ENCODE measurements at regions of chr18 and their contacts with region 1.

Region 1: GRCh38 chr18:8696749-8697211 is 8.6 kb upstream of the MTCL1 start:
- DNase-seq: peak; percentile 74
- ATAC-seq: peak; percentile 82
- H3K4me3 Mint-ChIP-seq: no peak overlapping the region
- H3K27ac Mint-ChIP-seq: no peak overlapping the region
- H3K4me1 Mint-ChIP-seq: peaks cover 12% of the 10 kb centered on the region
- H3K27me3 Mint-ChIP-seq: no peaks in the 10 kb centered on the region
- CTCF ChIP-seq: peak; percentile 62

Region 2: GRCh38 chr18:8609659-8610458 is 86.9 kb before region 1 on chr18:
- CTCF ChIA-PET with region 1: no interaction called
- POLR2A ChIA-PET with region 1: no interaction called
- intact Hi-C with region 1: no loop called
- DNase-seq: no peak
- ATAC-seq: peak; percentile 13
- H3K4me3 Mint-ChIP-seq: peak overlapping the region; percentile 89
- H3K27ac Mint-ChIP-seq: peak overlapping the region; percentile 76
- H3K4me1 Mint-ChIP-seq: peaks cover 72% of the 10 kb centered on the region
- H3K27me3 Mint-ChIP-seq: no peaks in the 10 kb centered on the region
- CTCF ChIP-seq: no peak

Region 3: DNA sequence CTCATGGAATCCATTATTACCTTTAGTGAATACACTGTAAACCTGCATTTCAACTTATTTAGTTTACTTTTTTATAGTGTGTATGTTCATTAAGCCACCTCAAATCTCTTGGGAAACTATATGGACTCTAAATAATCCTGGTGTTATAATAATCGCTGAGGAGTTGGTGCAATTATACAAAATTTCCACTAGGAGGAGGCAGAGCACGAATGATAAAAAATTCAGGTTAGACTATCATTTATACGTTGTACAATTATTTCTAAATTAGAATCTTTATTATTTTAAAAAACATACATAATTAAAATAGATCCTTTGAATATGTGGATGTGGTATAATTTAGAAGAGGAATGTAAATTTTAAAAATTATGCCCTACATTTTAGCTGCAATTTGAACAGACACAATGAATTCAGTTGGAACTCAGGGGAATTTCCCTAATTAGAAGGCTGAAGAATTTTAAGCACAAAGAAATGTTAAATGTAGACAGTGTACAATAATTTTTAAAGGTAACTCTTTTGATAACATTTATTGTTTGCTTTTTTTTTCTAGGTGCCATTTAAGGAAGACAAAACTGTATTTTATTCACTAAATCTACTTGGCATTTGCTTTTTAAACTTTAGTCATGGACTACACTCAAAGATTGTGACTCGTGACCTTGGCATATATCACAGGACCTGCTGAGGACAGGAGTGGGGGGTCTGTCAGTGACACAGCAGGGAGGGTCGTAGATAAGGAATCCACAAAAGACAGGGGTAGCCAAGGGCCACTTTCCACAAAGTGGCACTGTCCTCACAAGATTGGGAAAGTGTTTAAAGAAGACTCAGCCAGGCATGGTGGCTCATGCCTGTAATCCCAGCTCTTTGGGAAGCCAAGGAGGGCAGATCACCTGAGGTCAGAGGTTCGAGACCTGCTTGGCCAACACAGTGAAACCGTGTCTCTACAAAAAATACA is 42.0 kb before region 1 on chr18:
- CTCF ChIA-PET with region 1: interaction called, 11 read pairs
- POLR2A ChIA-PET with region 1: no interaction called
- intact Hi-C with region 1: loop called (anchors 1 kb)
- DNase-seq: no peak
- ATAC-seq: no peak
- H3K4me3 Mint-ChIP-seq: no peak overlapping the region
- H3K27ac Mint-ChIP-seq: no peak overlapping the region
- H3K4me1 Mint-ChIP-seq: peaks cover 6% of the 10 kb centered on the region
- H3K27me3 Mint-ChIP-seq: no peaks in the 10 kb centered on the region
- CTCF ChIP-seq: peak; percentile 67

Region 4: GRCh38 chr18:8730080-8730827 is 33.5 kb after region 1 on chr18:
- CTCF ChIA-PET with region 1: interaction called, 5 read pairs
- POLR2A ChIA-PET with region 1: interaction called, 11 read pairs
- intact Hi-C with region 1: no loop called
- DNase-seq: no peak
- ATAC-seq: no peak
- H3K4me3 Mint-ChIP-seq: peak overlapping the region; percentile 1
- H3K27ac Mint-ChIP-seq: no peak overlapping the region
- H3K4me1 Mint-ChIP-seq: peaks cover 25% of the 10 kb centered on the region
- H3K27me3 Mint-ChIP-seq: peaks cover 2% of the 10 kb centered on the region
- CTCF ChIP-seq: no peak

Region 5: DNA sequence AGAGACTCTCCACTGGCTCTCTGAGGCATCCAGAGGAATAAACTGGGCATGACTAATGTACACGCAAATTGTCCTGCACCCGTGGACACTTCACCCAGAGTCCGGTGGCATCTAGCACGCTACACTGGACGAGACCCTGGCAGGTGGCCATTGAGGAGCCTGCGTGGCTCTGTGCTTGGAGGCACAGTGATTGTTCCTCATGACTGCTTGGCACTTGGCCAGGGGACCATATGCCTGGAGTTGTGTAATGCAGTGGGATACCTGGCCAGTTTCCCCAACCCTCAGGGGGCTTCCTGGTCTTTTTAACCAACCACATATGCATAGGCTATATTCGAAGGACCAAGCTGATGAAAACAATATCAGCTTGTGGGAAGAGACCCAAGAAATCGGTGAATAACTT is 75.2 kb after region 1 on chr18:
- CTCF ChIA-PET with region 1: no interaction called
- POLR2A ChIA-PET with region 1: no interaction called
- intact Hi-C with region 1: no loop called
- DNase-seq: no peak
- ATAC-seq: no peak
- H3K4me3 Mint-ChIP-seq: no peak overlapping the region
- H3K27ac Mint-ChIP-seq: no peak overlapping the region
- H3K4me1 Mint-ChIP-seq: no peaks in the 10 kb centered on the region
- H3K27me3 Mint-ChIP-seq: no peaks in the 10 kb centered on the region
- CTCF ChIP-seq: no peak

Region 6: GRCh38 chr18:8786478-8787370 is 89.9 kb after region 1 on chr18:
- CTCF ChIA-PET with region 1: no interaction called
- POLR2A ChIA-PET with region 1: no interaction called
- intact Hi-C with region 1: loop called (anchors 1 kb)
- DNase-seq: no peak
- ATAC-seq: peak; percentile 65
- H3K4me3 Mint-ChIP-seq: peak overlapping the region; percentile 53
- H3K27ac Mint-ChIP-seq: peak overlapping the region; percentile 19
- H3K4me1 Mint-ChIP-seq: peaks cover 11% of the 10 kb centered on the region
- H3K27me3 Mint-ChIP-seq: no peaks in the 10 kb centered on the region
- CTCF ChIP-seq: no peak

Region 7: GRCh38 chr18:8982416-8983184 is 285.8 kb after region 1 on chr18:
- CTCF ChIA-PET with region 1: interaction called, 49 read pairs
- POLR2A ChIA-PET with region 1: no interaction called
- intact Hi-C with region 1: loop called (anchors 1 kb)
- DNase-seq: no peak
- ATAC-seq: peak; percentile 65
- H3K4me3 Mint-ChIP-seq: no peak overlapping the region
- H3K27ac Mint-ChIP-seq: no peak overlapping the region
- H3K4me1 Mint-ChIP-seq: peaks cover 20% of the 10 kb centered on the region
- H3K27me3 Mint-ChIP-seq: no peaks in the 10 kb centered on the region
- CTCF ChIP-seq: no peak

Region 8: GRCh38 chr18:10453806-10454673 is 1757.3 kb after region 1 on chr18 and contains the start of gene APCDD1:
- CTCF ChIA-PET with region 1: no interaction called
- POLR2A ChIA-PET with region 1: no interaction called
- intact Hi-C with region 1: no loop called
- DNase-seq: peak; percentile 31
- ATAC-seq: peak; percentile 76
- H3K4me3 Mint-ChIP-seq: peak within 1 kb of the TSS; percentile 79
- H3K27ac Mint-ChIP-seq: no peak within 1 kb of the TSS
- H3K4me1 Mint-ChIP-seq: peaks cover 28% of the 10 kb centered on the region
- H3K27me3 Mint-ChIP-seq: peaks cover 32% of the 10 kb centered on the region
- CTCF ChIP-seq: no peak
- total RNA-seq, gene APCDD1: 0.15 and 0.38 TPM in 2 replicates